Activated T-helper 2 cell treated with anti-CD3 and anti-CD28 coated beads, Interferon-gamma antibody, Interleukin-2, Interleukin-4, amounts not matched to agents 10 μg/mL and 5 μg/mL and 100 μg/mL, durations not matched to agents 14 hours and 24 hours and 36 hours (primary cell): ENCODE measurements at regions of chr12 and their contacts with region 1.

Region 1: DNA sequence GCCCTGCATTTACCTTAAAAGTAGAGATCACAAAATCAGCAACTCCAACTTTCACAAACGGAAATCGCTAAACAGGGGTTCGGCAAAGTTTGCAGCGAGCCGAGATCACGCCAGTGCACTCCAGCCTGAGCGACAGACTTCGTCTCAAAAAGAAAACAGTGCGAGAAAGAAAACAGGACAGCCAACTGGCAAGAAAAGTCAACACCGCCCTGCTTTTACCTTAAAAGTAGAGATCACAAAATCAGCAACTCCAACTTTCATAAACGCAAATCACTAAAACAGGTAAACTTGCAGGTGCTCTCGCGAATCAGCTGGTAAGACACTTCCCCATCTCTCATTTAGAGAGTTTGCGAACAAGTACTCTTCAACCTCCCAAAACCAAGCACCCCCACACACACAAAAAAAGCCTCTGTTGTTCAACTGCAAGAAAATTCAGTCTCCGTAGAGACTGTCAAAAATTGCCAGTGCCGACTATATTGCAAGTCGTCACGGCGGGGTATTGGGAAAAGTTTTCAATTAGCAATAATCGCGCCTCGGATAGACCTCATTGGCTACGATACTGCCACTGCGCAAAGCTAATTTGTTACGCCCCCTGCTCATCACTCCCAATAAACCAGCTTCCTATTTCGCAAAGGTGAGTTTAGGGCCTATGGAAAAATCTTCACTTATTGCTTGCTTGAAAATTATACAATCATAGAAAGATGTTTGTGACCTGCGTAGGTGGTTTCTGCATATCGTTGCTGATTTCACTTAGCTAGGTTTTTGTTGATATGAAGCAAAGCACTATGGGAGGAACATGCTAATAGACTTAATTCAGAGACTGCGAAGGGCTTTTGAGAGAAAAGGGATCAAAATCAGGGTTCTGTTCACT is at the start of gene RNU4-1:
- DNase-seq: peak; percentile 76
- H3K4me3 Mint-ChIP-seq: no peak within 1 kb of the TSS
- H3K27ac Mint-ChIP-seq: no peak within 1 kb of the TSS
- H3K4me1 Mint-ChIP-seq: peaks cover 8% of the 10 kb centered on the region
- H3K27me3 Mint-ChIP-seq: peaks cover 9% of the 10 kb centered on the region
- total RNA-seq, gene RNU4-1: 2,603 and 2,662 TPM in 2 replicates

Region 2: DNA sequence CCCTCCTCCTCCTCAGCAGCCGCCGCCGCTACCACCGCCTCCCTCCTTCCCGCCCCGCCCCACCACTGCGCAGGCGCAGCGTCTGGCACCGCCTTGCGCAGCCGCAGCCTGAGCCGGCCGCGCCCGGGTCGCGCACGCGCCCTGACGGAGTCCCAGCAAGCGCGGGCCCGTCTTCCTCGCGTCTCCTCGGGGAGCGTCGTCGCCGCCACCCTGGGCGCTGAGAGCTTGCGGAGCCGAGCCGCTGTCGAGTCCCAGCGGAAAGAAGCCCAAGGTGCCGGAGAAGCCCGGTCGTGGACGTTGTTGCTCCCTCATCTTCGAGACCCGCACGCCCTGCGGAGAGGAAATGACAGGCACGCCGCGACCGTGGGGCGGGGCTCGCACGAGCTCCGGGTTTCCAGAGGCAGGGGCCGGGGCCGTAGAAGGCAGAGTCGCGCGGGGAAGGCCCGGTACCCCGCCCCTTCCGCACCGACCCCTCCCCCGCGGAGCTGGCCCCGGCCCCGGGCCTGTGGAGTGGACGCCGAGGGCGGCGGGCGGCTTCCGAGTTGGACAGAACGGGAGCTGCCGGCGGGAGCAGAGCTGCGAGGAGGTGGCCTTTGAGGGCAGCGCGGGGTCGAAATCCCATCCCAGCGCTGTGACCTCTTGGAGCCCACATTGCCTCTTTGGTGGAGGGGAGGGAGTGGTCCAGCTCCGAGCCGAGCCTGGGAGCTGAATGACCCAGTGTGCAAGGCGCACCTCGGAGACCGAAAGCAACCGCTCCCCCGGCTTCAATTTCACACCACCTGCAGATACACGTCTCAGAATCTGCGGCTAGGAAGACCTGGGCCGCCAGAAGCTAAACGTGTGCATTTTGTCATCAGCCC is 175.9 kb before region 1 on chr12:
- intact Hi-C with region 1: loop called (anchors 2 kb)
- DNase-seq: peak; percentile 97
- H3K4me3 Mint-ChIP-seq: peak overlapping the region; percentile 86
- H3K27ac Mint-ChIP-seq: peak overlapping the region; percentile 83
- H3K4me1 Mint-ChIP-seq: peaks cover 67% of the 10 kb centered on the region
- H3K27me3 Mint-ChIP-seq: no peaks in the 10 kb centered on the region

Region 3: DNA sequence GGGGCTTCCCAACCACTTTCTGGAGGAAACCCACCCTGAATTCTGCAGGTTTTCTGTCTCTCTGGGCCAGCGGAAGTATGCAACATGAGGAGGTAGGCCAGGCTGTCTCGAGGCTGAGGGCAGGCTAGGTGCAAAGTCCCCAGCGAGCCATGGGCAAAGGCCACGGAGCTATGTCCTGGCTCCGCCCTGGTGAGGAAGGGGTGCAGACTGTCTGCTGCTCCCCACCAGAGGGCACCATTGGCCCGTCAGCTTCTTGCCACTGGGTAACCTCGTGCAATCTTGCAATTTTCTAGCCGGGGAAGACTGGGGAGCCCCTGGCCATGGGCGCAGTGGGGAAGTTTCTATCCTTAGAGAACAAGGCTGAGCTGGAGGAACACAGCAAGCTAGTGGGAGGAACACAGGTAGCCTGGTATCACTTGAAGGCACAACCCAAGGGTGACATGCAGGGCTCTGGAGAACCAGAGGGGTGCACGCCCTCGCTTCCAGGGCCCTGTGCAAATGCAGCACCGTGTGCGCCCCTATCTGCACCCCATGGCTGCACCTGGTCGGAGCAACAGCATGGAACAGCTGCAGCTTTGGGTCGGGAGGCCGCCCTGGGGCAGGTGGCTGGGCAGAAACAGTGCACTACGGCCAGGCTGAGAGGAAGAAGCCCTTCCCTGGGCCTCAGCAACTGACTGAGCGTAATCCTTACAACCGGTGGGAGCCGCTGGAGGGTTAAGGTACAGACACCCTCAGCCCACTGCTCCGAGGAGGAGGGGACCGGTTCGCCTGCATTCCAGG is 64.4 kb before region 1 on chr12:
- intact Hi-C with region 1: loop called (anchors 1 kb)
- DNase-seq: peak; percentile 79
- H3K4me3 Mint-ChIP-seq: peak overlapping the region; percentile 24
- H3K27ac Mint-ChIP-seq: peak overlapping the region; percentile 71
- H3K4me1 Mint-ChIP-seq: peaks cover 65% of the 10 kb centered on the region
- H3K27me3 Mint-ChIP-seq: no peaks in the 10 kb centered on the region

Region 4: DNA sequence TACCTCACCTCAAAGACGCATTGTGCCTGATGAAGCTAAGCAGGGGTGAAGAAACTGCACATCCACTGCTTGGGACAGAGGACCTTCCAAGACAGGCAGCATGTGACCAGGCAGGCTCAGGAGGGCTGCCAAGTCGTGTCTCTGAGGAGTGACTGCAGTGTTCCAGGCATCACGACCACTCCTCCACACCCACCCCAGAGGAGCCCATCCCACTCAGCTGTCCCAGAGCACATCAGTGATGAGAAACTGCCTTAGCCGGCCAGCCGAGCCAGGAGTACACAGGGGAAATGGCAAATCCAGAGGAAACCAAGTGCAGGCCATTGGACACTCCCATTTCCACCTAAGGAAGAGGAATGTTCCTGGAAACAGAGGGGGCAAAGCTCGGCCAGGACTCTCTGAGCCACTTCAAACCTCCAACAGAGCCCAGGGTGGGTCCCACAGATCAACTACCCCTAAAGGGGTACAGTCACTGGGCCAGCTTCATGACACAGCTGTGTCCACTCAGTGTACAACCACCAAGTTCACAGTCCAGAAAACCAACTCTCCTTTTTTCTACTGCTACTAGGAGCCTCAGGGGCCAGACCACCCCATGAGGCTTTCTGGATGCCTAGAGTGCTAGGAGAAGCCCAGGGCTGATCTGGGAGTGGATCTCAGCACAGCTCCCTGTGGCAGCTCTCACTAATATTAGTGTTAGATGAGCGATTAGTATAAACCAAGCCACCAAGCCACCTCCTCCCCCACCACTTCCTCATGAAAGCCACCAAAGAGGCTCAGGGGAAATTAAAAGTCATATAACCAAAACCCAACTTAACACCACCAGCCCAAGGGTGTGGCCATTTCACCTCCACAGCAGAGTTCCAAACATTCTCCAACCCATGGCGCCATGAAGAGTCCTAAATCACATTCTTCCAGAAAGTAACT is 42.8 kb before region 1 on chr12:
- intact Hi-C with region 1: loop called (anchors 2 kb)
- DNase-seq: peak; percentile 37
- H3K4me3 Mint-ChIP-seq: peak overlapping the region; percentile 65
- H3K27ac Mint-ChIP-seq: peak overlapping the region; percentile 30
- H3K4me1 Mint-ChIP-seq: peaks cover 65% of the 10 kb centered on the region
- H3K27me3 Mint-ChIP-seq: no peaks in the 10 kb centered on the region

Region 5: DNA sequence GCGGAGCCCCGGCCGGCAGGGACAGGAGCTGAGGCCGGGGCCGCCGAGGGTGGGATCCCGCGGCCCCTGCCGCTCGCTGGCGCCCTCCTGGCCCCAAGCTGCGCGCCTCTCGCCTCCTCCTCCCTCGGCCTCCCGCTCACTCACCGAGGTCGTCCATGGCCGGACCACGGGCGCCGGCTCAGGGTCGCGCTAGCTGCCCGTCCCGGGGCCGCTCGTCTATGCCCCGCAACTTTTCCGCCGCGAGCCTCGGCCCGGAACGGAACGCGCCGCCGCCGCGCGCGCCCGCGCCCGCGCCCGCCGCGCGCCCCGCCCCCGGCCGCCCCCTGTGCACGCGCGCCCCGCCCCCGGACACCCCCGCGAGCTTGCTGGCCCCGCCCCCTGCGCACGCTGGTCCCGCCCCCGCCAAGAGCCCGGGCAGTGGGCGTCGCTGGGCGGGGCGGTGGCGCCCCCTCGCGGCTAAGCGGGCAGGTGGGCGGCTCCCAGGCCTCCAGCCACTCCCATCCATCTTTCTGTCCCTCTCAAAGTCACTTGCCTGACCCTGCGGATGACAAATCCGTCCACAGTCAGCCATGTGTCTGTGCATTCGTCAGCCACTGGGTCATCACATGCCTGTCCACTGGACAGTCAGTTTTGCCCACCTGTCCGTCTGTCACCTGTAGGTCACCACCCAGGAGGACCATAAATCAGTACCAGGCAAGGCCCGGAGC is 27.3 kb before region 1 on chr12 and contains the start of gene PXN:
- intact Hi-C with region 1: loop called (anchors 1 kb)
- DNase-seq: peak; percentile 85
- H3K4me3 Mint-ChIP-seq: peak within 1 kb of the TSS; percentile 90
- H3K27ac Mint-ChIP-seq: peak within 1 kb of the TSS; percentile 85
- H3K4me1 Mint-ChIP-seq: peaks cover 43% of the 10 kb centered on the region
- H3K27me3 Mint-ChIP-seq: no peaks in the 10 kb centered on the region
- total RNA-seq, gene PXN: 44.4 and 45.4 TPM in 2 replicates

Region 6: DNA sequence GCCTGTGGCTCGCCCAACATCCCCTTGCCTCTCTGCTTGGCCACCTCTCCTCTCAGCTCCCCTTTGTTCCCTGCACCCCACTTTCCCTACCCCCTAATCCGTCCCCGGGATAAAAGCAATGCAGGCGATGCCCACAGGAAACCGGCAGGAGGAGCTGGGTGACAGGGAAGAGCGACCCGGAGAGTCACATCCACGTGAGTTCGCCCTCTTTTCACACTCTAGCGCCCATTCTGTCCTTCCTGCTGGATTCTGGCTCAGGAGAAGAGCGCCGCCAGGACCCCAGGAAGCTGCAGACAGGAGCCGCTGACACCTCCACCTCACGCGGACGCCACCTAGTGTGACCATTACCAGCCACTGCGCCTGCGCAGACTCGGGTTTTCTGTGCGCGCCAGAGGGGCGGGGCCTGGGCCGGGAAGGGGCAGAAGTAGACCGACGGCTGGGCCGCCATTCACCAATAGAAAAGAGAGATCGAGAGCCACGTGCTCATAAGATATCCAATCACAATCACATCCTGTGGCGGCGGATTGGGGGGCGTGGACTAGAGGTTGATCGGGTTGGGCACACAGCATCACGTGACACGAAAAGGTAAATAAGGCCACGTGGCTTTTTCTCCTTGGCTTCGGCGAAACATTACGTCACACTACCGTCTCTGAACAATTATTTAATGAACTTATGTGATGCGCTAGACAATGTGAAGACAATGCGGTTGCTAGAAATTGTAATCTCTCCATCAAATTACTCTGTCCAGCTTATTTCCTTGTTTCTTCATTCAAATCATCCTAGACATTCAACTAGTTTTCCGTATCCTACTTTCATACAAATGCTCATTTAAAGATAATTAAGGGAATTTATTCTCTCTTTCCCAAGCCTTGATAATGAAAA is 24.6 kb after region 1 on chr12:
- intact Hi-C with region 1: loop called (anchors 1 kb)
- DNase-seq: peak; percentile 100
- H3K4me3 Mint-ChIP-seq: peak overlapping the region; percentile 95
- H3K27ac Mint-ChIP-seq: peak overlapping the region; percentile 96
- H3K4me1 Mint-ChIP-seq: peaks cover 11% of the 10 kb centered on the region
- H3K27me3 Mint-ChIP-seq: peaks cover 4% of the 10 kb centered on the region